GM12878 (cell line): ENCODE measurements at regions of chr18 and their contacts with region 1.

Region 1: GRCh38 chr18:63161761-63162195 is 157.8 kb downstream of the BCL2 start:
- DNase-seq: peak; percentile 98
- ATAC-seq: peak; percentile 60
- H3K4me3 ChIP-seq: peak overlapping the region; percentile 62; the same call in 1 of the 2 replicates
- H3K27ac ChIP-seq: peak overlapping the region; percentile 100
- H3K4me1 ChIP-seq: peaks cover 59% of the 10 kb centered on the region
- H3K27me3 ChIP-seq: no peaks in the 10 kb centered on the region
- CTCF ChIP-seq: no peak
- EP300 ChIP-seq: peak; percentile 98
- POLR2A ChIP-seq: peak; percentile 94
- RAD21 ChIP-seq: peak; percentile 35

Region 2: GRCh38 chr18:63131106-63131958 is 30.4 kb before region 1 on chr18:
- CTCF ChIA-PET with region 1: interaction called, 416 read pairs
- POLR2A ChIA-PET with region 1: interaction called, 278 read pairs
- RAD21 ChIA-PET with region 1: interaction called, 463 read pairs
- SMC1A ChIA-PET with region 1: interaction called, 453 read pairs
- in situ Hi-C with region 1: no loop called
- intact Hi-C with region 1: no loop called
- DNase-seq: no peak
- ATAC-seq: peak; percentile 84
- H3K4me3 ChIP-seq: no peak overlapping the region
- H3K27ac ChIP-seq: peak overlapping the region; percentile 49
- H3K4me1 ChIP-seq: peaks cover 24% of the 10 kb centered on the region
- H3K27me3 ChIP-seq: no peaks in the 10 kb centered on the region
- CTCF ChIP-seq: peak; percentile 52 to 65 (median 59)
- EP300 ChIP-seq: no peak
- POLR2A ChIP-seq: no peak
- RAD21 ChIP-seq: peak; percentile 76

Region 3: GRCh38 chr18:63148449-63149301 is 13.1 kb before region 1 on chr18:
- CTCF ChIA-PET with region 1: interaction called, 416 read pairs
- POLR2A ChIA-PET with region 1: interaction called, 278 read pairs
- RAD21 ChIA-PET with region 1: interaction called, 463 read pairs
- SMC1A ChIA-PET with region 1: interaction called, 453 read pairs
- in situ Hi-C with region 1: no loop called
- intact Hi-C with region 1: no loop called
- DNase-seq: no peak
- ATAC-seq: no peak
- H3K4me3 ChIP-seq: no peak overlapping the region
- H3K27ac ChIP-seq: 0 out of 2 replicates have a peak overlapping the region, but pooled peaks have one; percentile 50
- H3K4me1 ChIP-seq: peaks cover 47% of the 10 kb centered on the region
- H3K27me3 ChIP-seq: no peaks in the 10 kb centered on the region
- CTCF ChIP-seq: no peak
- EP300 ChIP-seq: no peak
- POLR2A ChIP-seq: no peak
- RAD21 ChIP-seq: no peak

Region 4: GRCh38 chr18:63186520-63187222 is 24.9 kb after region 1 on chr18:
- CTCF ChIA-PET with region 1: interaction called, 16 read pairs
- POLR2A ChIA-PET with region 1: interaction called, 12 read pairs
- RAD21 ChIA-PET with region 1: interaction called, 51 read pairs
- SMC1A ChIA-PET with region 1: interaction called, 50 read pairs
- in situ Hi-C with region 1: no loop called
- intact Hi-C with region 1: loop called (anchors 1 kb)
- DNase-seq: no peak
- ATAC-seq: peak; percentile 16
- H3K4me3 ChIP-seq: no peak overlapping the region
- H3K27ac ChIP-seq: peak overlapping the region; percentile 67
- H3K4me1 ChIP-seq: peaks cover 67% of the 10 kb centered on the region
- H3K27me3 ChIP-seq: no peaks in the 10 kb centered on the region
- CTCF ChIP-seq: no peak
- EP300 ChIP-seq: no peak
- POLR2A ChIP-seq: no peak
- RAD21 ChIP-seq: no peak

Region 5: GRCh38 chr18:63207143-63207790 is 45.5 kb after region 1 on chr18:
- CTCF ChIA-PET with region 1: interaction called, 4 read pairs
- POLR2A ChIA-PET with region 1: interaction called, 5 read pairs
- RAD21 ChIA-PET with region 1: interaction called, 15 read pairs
- SMC1A ChIA-PET with region 1: interaction called, 4 read pairs
- in situ Hi-C with region 1: no loop called
- intact Hi-C with region 1: loop called (anchors 5 kb)
- DNase-seq: no peak
- ATAC-seq: peak; percentile 64
- H3K4me3 ChIP-seq: peak overlapping the region; percentile 50; the same call in 1 of the 2 replicates
- H3K27ac ChIP-seq: peak overlapping the region; percentile 53
- H3K4me1 ChIP-seq: peaks cover 56% of the 10 kb centered on the region
- H3K27me3 ChIP-seq: no peaks in the 10 kb centered on the region
- CTCF ChIP-seq: no peak
- EP300 ChIP-seq: no peak
- POLR2A ChIP-seq: no peak
- RAD21 ChIP-seq: no peak

Region 6: GRCh38 chr18:63292831-63293683 is 131.3 kb after region 1 on chr18:
- CTCF ChIA-PET with region 1: no interaction called
- POLR2A ChIA-PET with region 1: interaction called, 12 read pairs
- RAD21 ChIA-PET with region 1: interaction called, 5 read pairs
- SMC1A ChIA-PET with region 1: interaction called, 8 read pairs
- in situ Hi-C with region 1: no loop called
- intact Hi-C with region 1: no loop called
- DNase-seq: no peak
- ATAC-seq: peak; percentile 82
- H3K4me3 ChIP-seq: peak overlapping the region; percentile 18; the same call in 1 of the 2 replicates
- H3K27ac ChIP-seq: peak overlapping the region; percentile 76
- H3K4me1 ChIP-seq: peaks cover 24% of the 10 kb centered on the region
- H3K27me3 ChIP-seq: no peaks in the 10 kb centered on the region
- CTCF ChIP-seq: no peak
- EP300 ChIP-seq: no peak
- POLR2A ChIP-seq: no peak
- RAD21 ChIP-seq: 0 out of 2 replicates have a peak, but pooled peaks have one; percentile 6